ENCODE measurements at regions of chr2 and their contacts with region 1.

Region 1: GRCh38 chr2:68594674-68595492 is 48.5 kb upstream of the PROKR1 start:
- DNase-seq: peak; percentile 62
- H3K4me3 Mint-ChIP-seq: no peak overlapping the region
- H3K27ac Mint-ChIP-seq: no peak overlapping the region
- H3K4me1 Mint-ChIP-seq: peaks cover 8% of the 10 kb centered on the region
- H3K27me3 Mint-ChIP-seq: peaks cover 2% of the 10 kb centered on the region

Region 2: DNA sequence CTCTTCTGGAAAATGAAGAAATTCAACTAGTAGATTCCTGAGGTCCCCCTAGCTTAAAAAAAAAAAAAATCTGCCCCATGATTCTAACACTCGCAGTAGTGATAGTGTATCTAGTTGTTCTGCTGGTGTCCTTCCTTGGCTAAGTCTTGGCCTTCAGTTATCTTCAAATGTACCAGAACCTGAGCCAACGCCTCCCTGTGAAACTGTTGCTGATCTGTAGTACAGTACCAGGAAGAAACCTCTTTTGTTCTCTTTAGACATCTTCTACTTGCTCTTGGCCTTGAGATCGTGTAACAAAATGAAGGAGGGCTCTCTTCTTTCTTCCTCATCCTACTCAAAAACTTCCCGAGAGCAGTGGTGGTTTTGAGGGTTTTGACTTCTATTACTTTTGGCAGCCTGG is 198.8 kb before region 1 on chr2:
- CTCF ChIA-PET with region 1: no interaction called
- POLR2A ChIA-PET with region 1: no interaction called
- intact Hi-C with region 1: no loop called
- DNase-seq: no peak
- H3K4me3 Mint-ChIP-seq: no peak overlapping the region
- H3K27ac Mint-ChIP-seq: no peak overlapping the region
- H3K4me1 Mint-ChIP-seq: no peaks in the 10 kb centered on the region
- H3K27me3 Mint-ChIP-seq: no peaks in the 10 kb centered on the region

Region 3: DNA sequence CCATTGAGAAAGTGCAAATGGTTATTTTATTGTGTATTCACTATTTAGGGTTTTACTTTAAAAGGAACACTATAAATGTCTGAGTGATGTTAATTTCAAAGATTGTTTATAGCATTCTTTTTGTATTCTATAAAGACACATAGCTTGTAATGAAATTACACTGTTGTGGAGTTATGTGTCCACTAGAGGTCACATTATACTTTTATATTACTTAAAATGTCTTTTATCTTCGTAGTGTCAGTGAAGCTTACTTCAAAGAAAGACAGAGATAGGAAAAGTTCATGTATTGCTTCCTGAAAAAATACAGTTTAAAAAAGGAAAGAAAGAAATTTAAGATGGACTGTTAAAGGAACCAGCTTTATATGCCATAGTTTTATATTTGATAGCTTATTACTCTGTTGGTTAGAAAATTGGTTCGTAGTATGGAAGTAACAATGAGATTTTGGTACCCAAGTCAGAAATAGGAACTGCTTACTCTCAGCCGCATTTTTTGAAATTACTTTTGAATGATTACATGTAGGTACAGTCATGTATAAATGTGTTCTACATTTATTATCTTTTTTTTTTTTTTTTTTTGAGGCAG is 107.0 kb before region 1 on chr2:
- CTCF ChIA-PET with region 1: interaction called, 35 read pairs
- POLR2A ChIA-PET with region 1: no interaction called
- intact Hi-C with region 1: no loop called
- DNase-seq: no peak
- H3K4me3 Mint-ChIP-seq: no peak overlapping the region
- H3K27ac Mint-ChIP-seq: no peak overlapping the region
- H3K4me1 Mint-ChIP-seq: peaks cover 2% of the 10 kb centered on the region
- H3K27me3 Mint-ChIP-seq: no peaks in the 10 kb centered on the region

Region 4: DNA sequence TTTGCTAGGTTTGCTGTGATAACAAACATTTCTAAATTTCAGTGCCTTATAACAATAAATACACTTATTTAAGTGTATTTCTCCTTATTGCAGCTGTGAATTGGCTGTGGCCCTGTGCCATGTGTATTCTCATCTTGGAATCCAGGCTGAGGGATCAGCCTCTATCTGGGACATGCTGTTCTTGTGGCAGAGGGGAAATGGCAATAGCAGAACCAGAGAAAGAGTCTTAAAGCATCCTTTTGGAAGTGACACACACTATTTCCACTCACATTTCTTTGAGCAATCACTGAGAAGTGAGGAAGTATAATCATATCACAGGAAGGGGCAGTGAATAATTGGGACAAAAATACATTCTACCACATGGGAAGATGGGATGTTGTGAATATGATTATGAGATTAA is 17.7 kb before region 1 on chr2:
- CTCF ChIA-PET with region 1: interaction called, 10 read pairs
- POLR2A ChIA-PET with region 1: no interaction called
- intact Hi-C with region 1: no loop called
- DNase-seq: no peak
- H3K4me3 Mint-ChIP-seq: no peak overlapping the region
- H3K27ac Mint-ChIP-seq: no peak overlapping the region
- H3K4me1 Mint-ChIP-seq: no peaks in the 10 kb centered on the region
- H3K27me3 Mint-ChIP-seq: no peaks in the 10 kb centered on the region

Region 5: GRCh38 chr2:68646302-68646701 is 51.4 kb after region 1 on chr2:
- CTCF ChIA-PET with region 1: interaction called, 13 read pairs
- POLR2A ChIA-PET with region 1: no interaction called
- intact Hi-C with region 1: no loop called
- DNase-seq: no peak
- H3K4me3 Mint-ChIP-seq: no peak overlapping the region
- H3K27ac Mint-ChIP-seq: no peak overlapping the region
- H3K4me1 Mint-ChIP-seq: peaks cover 12% of the 10 kb centered on the region
- H3K27me3 Mint-ChIP-seq: peaks cover 60% of the 10 kb centered on the region

Region 6: DNA sequence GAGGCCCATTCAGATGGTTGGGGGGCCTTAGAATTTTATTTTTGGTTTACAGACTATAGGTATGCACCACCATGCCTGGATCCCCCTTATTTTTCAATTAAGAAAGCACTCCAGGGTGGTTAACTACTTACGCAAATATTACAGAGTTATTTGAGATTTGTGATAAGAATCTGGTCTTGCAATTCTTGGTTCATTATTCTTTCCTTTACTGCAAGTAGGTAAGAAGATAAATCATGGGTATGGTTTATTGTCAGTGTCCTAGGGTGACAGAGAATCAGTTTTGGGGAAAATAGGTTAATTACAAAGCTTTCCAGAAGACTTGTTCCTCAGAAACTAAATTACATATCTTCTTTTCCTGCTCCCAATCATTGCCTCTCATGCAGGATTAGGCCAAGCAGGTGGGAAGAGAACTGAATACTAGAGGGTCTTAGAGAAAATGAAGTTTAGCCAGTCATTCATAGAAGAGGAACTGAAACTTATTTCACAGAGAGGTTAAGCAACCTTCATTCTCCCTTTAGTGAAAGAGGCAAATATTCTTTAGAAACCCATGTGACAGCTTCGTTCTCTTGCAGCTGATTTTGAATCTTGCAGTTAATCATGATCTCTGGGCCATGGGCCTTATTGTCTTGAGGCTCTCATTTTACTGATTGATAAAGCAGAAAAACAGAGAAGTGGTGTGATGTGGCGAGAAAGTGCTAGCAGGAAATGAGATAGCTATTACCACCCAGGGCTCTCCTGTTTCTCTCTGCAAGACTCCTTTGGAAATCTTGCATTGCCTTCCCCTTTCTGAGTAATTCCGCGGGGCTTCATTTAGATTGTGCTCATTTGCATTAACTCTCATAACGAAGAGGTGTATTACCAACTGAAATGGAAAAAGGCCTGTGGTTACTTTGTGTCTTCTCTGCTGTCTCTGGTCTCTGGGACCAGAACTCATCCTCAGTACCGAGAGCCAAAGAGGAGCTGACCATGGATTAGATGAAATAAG is 95.0 kb after region 1 on chr2:
- CTCF ChIA-PET with region 1: interaction called, 10 read pairs
- POLR2A ChIA-PET with region 1: no interaction called
- intact Hi-C with region 1: no loop called
- DNase-seq: peak; percentile 28
- H3K4me3 Mint-ChIP-seq: no peak overlapping the region
- H3K27ac Mint-ChIP-seq: peak overlapping the region; percentile 26
- H3K4me1 Mint-ChIP-seq: peaks cover 18% of the 10 kb centered on the region
- H3K27me3 Mint-ChIP-seq: peaks cover 8% of the 10 kb centered on the region

Measured in activated CD4-positive, alpha-beta memory T cell treated with anti-CD3 and anti-CD28 coated beads for 36 hours (primary cell).